Vagina (tissue), 2 donors: ENCODE measurements at regions of chr12 and their contacts with region 1.

Region 1: GRCh38 chr12:8681041-8681902 is 16.5 kb upstream of the RIMKLB start:
- DNase-seq: no peak
- H3K4me3 ChIP-seq: no peak overlapping the region
- H3K27ac ChIP-seq: peak overlapping the region; percentile 8
- H3K4me1 ChIP-seq: no peaks in the 10 kb centered on the region
- H3K27me3 ChIP-seq: no peaks in the 10 kb centered on the region
- CTCF ChIP-seq: no peak
- POLR2A ChIP-seq: no peak

Region 2: DNA sequence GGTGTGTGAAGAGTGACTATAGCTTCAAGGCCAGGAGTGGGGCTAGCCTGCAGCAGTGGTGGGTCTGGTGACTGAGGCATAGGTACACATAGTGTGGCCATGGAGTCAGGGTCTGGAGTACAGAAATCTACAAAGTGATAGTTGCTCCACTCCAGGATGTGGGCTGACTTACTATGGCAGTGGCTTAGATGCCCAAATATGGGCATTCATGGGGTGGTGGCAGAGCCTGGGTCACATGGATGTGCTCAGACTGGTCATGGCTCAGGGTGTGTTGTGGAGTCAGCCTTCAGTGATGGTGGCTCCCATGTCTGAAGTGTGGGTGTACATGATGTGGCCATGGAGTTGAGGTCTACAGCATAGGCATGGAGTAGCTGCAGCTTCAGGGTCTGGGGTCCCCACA is 198.2 kb before region 1 on chr12:
- intact Hi-C with region 1: no loop called
- DNase-seq: no peak
- H3K4me3 ChIP-seq: no peak overlapping the region
- H3K27ac ChIP-seq: no peak overlapping the region
- H3K4me1 ChIP-seq: no peaks in the 10 kb centered on the region
- H3K27me3 ChIP-seq: no peaks in the 10 kb centered on the region
- CTCF ChIP-seq: no peak
- POLR2A ChIP-seq: no peak

Region 3: GRCh38 chr12:8734873-8735381 is 53.7 kb after region 1 on chr12:
- intact Hi-C with region 1: no loop called
- DNase-seq: no peak
- H3K4me3 ChIP-seq: no peak overlapping the region
- H3K27ac ChIP-seq: peak overlapping the region; percentile 56
- H3K4me1 ChIP-seq: peaks cover 28% of the 10 kb centered on the region
- H3K27me3 ChIP-seq: no peaks in the 10 kb centered on the region
- CTCF ChIP-seq: no peak
- POLR2A ChIP-seq: no peak

Region 4: DNA sequence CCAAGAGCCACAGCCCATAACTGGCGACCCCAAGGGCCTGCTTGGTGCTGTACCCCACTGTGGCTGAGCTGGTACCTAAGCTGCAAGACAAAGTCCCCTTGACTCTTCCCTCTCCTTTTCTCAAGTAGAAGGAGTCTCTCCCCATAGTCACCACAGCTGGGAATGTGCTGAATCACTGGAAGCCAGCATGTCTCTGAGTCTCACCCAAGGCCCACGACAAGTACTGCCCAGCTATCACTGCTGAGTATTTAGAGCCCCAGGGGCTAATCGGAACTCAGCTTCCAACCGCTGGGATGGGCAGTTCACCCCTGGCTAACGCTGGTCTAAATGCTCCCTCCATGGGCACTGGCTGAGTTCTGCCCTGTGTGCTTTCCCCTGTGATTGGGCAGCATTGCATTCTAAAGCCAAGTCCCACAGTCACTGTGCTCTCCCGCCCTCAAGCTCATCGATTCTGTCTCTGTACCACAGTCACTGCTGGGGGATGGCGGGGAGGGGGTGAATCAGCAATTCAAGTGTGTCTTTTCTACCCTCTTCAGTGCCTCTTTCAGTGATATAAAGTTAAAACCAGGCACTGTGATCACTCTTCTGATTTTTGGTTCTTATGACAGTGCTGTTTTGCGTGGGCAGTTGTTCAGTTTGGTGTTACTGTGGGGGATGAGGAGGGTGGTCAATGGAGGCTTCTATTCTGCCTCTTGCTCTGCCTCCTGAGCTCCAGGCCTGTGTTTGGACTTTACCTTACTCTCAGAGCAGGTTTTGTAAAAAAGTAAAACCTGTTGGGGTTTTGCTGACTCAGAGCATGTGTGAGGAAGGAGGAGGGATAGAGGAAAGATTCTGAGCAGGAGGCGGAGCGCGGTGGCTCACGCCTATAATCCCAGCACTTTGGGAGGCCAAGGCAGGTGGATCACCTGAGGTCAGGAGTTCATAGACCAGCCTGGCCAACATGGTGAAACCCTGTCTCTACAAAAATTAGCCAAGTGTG is 147.6 kb after region 1 on chr12:
- intact Hi-C with region 1: loop called (anchors 5 kb)
- DNase-seq: no peak
- H3K4me3 ChIP-seq: no peak overlapping the region
- H3K27ac ChIP-seq: no peak overlapping the region
- H3K4me1 ChIP-seq: no peaks in the 10 kb centered on the region
- H3K27me3 ChIP-seq: no peaks in the 10 kb centered on the region
- CTCF ChIP-seq: no peak
- POLR2A ChIP-seq: no peak

Region 5: DNA sequence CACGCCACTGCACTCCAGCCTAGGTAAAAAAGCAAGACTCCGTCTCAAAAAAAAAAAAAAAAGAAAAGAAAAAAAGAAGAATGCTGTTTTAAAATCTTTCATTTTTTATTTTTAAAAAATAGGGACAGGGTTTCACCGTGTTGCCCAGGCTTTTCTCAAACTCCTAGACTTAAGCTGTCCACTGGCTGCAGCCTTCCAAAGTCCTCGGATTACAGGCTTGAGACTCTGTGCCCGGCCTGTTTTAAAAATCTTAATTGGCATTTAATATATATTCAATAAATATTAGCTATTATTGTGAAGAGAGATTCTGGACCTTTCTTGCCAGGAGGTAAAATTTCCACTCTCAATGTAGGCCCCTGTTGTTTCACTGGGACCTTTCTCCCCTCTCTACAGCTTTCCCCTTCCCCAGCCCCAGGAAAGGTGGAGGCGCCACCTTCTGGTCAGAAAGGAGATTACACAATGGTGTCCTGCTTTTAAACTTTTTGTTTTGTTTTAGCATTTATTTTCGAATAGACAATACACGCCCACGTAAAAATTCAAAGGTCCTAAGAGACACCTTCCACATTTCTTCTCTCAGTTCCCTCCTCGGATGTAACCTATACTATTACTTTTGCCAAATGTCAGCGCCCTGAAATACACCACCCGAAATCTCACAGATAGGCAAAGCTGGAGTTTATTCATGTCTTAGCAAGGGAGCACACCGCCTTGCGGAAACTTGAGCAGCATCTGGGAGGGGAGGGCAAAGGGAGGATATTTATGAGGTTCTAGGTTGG is 209.2 kb after region 1 on chr12:
- intact Hi-C with region 1: loop called (anchors 10 kb)
- DNase-seq: no peak
- H3K4me3 ChIP-seq: peak overlapping the region; percentile 40 to 43
- H3K27ac ChIP-seq: no peak overlapping the region
- H3K4me1 ChIP-seq: no peaks in the 10 kb centered on the region
- H3K27me3 ChIP-seq: no peaks in the 10 kb centered on the region
- CTCF ChIP-seq: peak; percentile 48 to 86 (median 80)
- POLR2A ChIP-seq: no peak